GM12878 (cell line): ENCODE measurements at regions of chr1 and their contacts with region 1.

Region 1: GRCh38 chr1:44652445-44653106 is 21.7 kb downstream of the TMEM53 start:
- DNase-seq: no peak
- ATAC-seq: peak; percentile 98
- H3K4me3 ChIP-seq: no peak overlapping the region
- H3K27ac ChIP-seq: no peak overlapping the region
- H3K4me1 ChIP-seq: no peaks in the 10 kb centered on the region
- H3K27me3 ChIP-seq: no peaks in the 10 kb centered on the region
- CTCF ChIP-seq: peak; percentile 97 to 99 (median 98); a peak in 5 of 6 replicates
- EP300 ChIP-seq: no peak
- POLR2A ChIP-seq: no peak; the same call in 1 of the 2 replicates
- RAD21 ChIP-seq: peak; percentile 90

Region 2: DNA sequence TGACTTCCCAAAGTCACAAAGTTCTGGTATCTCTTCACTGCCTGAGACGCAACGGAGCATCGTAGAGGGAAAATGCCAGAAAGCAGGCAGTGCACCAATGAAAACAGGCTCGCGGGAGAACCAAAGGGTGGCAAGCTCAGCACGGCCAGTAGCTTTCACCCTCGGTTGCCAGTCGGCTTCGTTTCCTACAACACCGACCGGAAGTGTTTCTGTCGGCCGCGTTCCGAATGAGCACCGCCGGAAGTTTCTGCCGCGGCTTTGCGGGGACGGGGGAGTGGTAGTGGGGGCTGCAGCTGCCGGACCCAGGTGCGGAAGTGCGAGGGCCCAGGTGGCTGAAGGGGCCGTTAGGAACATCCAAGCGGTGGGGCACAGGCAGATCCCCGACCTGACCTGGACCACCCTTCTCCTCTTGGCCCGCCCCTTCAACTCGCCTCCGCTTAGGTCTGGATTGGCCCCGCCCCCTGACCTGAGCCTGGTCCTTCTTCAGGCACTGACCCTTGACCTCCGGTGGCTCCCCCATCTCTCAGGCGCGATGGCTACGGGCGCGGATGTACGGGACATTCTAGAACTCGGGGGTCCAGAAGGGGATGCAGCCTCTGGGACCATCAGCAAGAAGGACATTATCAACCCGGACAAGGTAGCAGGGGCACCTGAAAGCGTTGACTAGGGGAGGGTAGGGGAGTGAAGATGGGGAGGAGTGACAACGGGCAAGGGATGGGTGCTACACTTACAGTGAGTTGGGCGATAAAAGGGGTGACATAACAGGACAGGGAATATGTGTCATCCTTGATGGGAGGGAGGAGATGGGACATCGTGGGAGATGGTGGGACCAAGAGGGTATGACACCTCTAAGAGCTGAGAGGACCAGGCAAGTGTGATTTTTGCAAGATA is 439.1 kb before region 1 on chr1 and contains the start of gene DMAP1:
- CTCF ChIA-PET with region 1: interaction called, 20 read pairs
- POLR2A ChIA-PET with region 1: no interaction called
- RAD21 ChIA-PET with region 1: interaction called, 4 read pairs
- SMC1A ChIA-PET with region 1: interaction called, 4 read pairs
- in situ Hi-C with region 1: no loop called
- intact Hi-C with region 1: loop called (anchors 10 kb)
- DNase-seq: peak; percentile 46
- ATAC-seq: peak; percentile 89
- H3K4me3 ChIP-seq: peak within 1 kb of the TSS; percentile 99
- H3K27ac ChIP-seq: peak within 1 kb of the TSS; percentile 64
- H3K4me1 ChIP-seq: peaks cover 7% of the 10 kb centered on the region
- H3K27me3 ChIP-seq: no peaks in the 10 kb centered on the region
- CTCF ChIP-seq: peak in 1 of 3 experiments; percentile 10; a peak in 1 of 6 replicates
- EP300 ChIP-seq: no peak
- POLR2A ChIP-seq: peak; percentile 83
- RAD21 ChIP-seq: no peak
- polyA plus RNA-seq, gene DMAP1: 1.9 to 6.1 TPM

Region 3: DNA sequence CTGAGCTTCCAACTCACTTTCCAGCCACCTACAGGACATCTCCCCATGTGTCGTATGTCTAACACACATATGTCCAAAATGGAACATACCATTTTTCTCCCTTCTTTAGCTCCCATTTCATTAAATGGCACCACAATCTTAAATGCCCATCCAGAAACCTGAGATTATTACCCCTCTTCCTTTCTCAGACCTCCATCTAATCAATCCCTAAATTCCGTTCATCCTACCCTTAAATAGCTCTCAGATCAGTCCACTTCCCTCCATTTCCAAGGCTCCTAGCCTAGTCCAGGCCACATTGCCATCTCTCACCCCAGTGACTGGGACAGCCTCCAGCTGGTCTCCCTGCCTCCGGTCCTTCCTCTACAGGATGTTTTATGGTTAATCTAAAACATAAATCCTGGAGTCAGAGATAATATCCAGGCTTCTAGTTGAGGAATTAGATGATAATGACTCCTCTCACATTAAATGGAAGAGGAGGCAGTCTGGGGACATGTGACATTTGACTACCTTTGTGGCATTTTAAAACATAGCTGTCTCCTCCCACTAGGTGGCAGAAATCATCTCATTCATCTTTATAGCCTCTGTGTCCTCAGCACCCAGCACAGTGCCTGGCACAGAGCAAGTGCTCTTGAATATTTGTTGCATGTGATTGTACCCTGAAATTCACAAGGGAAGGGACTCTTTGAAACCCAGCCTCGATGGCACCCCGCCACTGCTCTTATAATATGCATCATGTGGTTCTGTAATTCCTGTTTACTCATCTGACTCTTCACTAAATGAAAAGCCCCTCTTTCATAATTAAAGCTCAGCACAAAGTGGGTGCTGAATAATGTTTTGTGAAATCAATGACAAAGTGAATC is 80.6 kb before region 1 on chr1:
- CTCF ChIA-PET with region 1: interaction called, 76 read pairs
- POLR2A ChIA-PET with region 1: no interaction called
- RAD21 ChIA-PET with region 1: interaction called, 15 read pairs
- SMC1A ChIA-PET with region 1: interaction called, 24 read pairs
- in situ Hi-C with region 1: no loop called
- intact Hi-C with region 1: loop called (anchors 2 kb)
- DNase-seq: no peak
- ATAC-seq: peak; percentile 82
- H3K4me3 ChIP-seq: no peak overlapping the region
- H3K27ac ChIP-seq: no peak overlapping the region
- H3K4me1 ChIP-seq: no peaks in the 10 kb centered on the region
- H3K27me3 ChIP-seq: peaks cover 1 to 9% of the 10 kb centered on the region in 2 experiments; a peak in 2 of 4 replicates
- CTCF ChIP-seq: peak; percentile 53 to 61 (median 55)
- EP300 ChIP-seq: no peak
- POLR2A ChIP-seq: no peak
- RAD21 ChIP-seq: no peak

Region 4: DNA sequence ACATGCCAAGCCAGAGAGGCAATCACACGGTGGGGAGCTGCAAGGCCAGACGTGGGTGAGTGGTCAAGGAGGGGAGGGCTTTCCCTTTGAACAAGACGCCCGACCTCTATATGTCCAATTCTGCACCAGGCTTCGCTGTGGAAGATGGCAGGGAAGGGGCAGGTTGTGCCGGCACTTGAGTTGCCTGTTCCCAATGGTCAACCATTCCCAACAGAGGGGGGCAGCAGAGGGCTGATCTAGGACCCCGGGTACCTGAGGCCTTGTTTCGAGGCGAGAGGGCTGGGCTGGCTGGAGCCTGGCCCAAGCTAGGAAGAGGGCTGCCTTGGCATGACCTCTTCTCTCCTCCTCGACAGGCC is 43.2 kb before region 1 on chr1:
- CTCF ChIA-PET with region 1: interaction called, 55 read pairs
- POLR2A ChIA-PET with region 1: no interaction called
- RAD21 ChIA-PET with region 1: interaction called, 11 read pairs
- SMC1A ChIA-PET with region 1: interaction called, 32 read pairs
- in situ Hi-C with region 1: no loop called
- intact Hi-C with region 1: loop called (anchors 1 kb)
- DNase-seq: no peak
- ATAC-seq: peak; percentile 87
- H3K4me3 ChIP-seq: no peak overlapping the region
- H3K27ac ChIP-seq: no peak overlapping the region
- H3K4me1 ChIP-seq: no peaks in the 10 kb centered on the region
- H3K27me3 ChIP-seq: peaks cover 0 to 1% of the 10 kb centered on the region in 2 experiments; a peak in 2 of 4 replicates
- CTCF ChIP-seq: peak; percentile 50 to 59 (median 56)
- EP300 ChIP-seq: no peak
- POLR2A ChIP-seq: no peak
- RAD21 ChIP-seq: peak; percentile 61

Region 5: GRCh38 chr1:44631647-44632539 is 20.7 kb before region 1 on chr1:
- CTCF ChIA-PET with region 1: interaction called, 70 read pairs
- POLR2A ChIA-PET with region 1: interaction called, 4 read pairs
- RAD21 ChIA-PET with region 1: interaction called, 4 read pairs
- SMC1A ChIA-PET with region 1: interaction called, 18 read pairs
- in situ Hi-C with region 1: no loop called
- intact Hi-C with region 1: no loop called
- DNase-seq: peak; percentile 37
- ATAC-seq: peak; percentile 86
- H3K4me3 ChIP-seq: peak overlapping the region; percentile 98
- H3K27ac ChIP-seq: peak overlapping the region; percentile 94
- H3K4me1 ChIP-seq: no peaks in the 10 kb centered on the region
- H3K27me3 ChIP-seq: no peaks in the 10 kb centered on the region
- CTCF ChIP-seq: no peak
- EP300 ChIP-seq: no peak
- POLR2A ChIP-seq: peak; percentile 91
- RAD21 ChIP-seq: no peak

Region 6: GRCh38 chr1:44664730-44665370 is 12.3 kb after region 1 on chr1:
- CTCF ChIA-PET with region 1: interaction called, 15 read pairs
- POLR2A ChIA-PET with region 1: interaction called, 3 read pairs
- RAD21 ChIA-PET with region 1: no interaction called
- SMC1A ChIA-PET with region 1: interaction called, 7 read pairs
- in situ Hi-C with region 1: no loop called
- intact Hi-C with region 1: no loop called
- DNase-seq: no peak
- ATAC-seq: peak; percentile 67
- H3K4me3 ChIP-seq: no peak overlapping the region
- H3K27ac ChIP-seq: 0 out of 2 replicates have a peak overlapping the region, but pooled peaks have one; percentile 9
- H3K4me1 ChIP-seq: peaks cover 10% of the 10 kb centered on the region
- H3K27me3 ChIP-seq: no peaks in the 10 kb centered on the region
- CTCF ChIP-seq: no peak
- EP300 ChIP-seq: no peak
- POLR2A ChIP-seq: peak; percentile 54
- RAD21 ChIP-seq: no peak

Region 7: GRCh38 chr1:44696789-44697345 is 44.3 kb after region 1 on chr1:
- CTCF ChIA-PET with region 1: interaction called, 28 read pairs
- POLR2A ChIA-PET with region 1: no interaction called
- RAD21 ChIA-PET with region 1: interaction called, 3 read pairs
- SMC1A ChIA-PET with region 1: interaction called, 3 read pairs
- in situ Hi-C with region 1: no loop called
- intact Hi-C with region 1: no loop called
- DNase-seq: no peak
- ATAC-seq: peak; percentile 74
- H3K4me3 ChIP-seq: no peak overlapping the region
- H3K27ac ChIP-seq: peak overlapping the region; percentile 45
- H3K4me1 ChIP-seq: peaks cover 51% of the 10 kb centered on the region
- H3K27me3 ChIP-seq: no peaks in the 10 kb centered on the region
- CTCF ChIP-seq: no peak
- EP300 ChIP-seq: no peak
- POLR2A ChIP-seq: 0 out of 2 replicates have a peak, but pooled peaks have one; percentile 24
- RAD21 ChIP-seq: no peak